Caco-2 (cell line): ENCODE measurements at regions of chr3 and their contacts with region 1.

Region 1: GRCh38 chr3:136075218-136075808 is 109.8 kb downstream of the PPP2R3A start:
- DNase-seq: peak; percentile 61 to 69
- H3K4me3 ChIP-seq: no peak overlapping the region
- H3K4me3 Mint-ChIP-seq: no peak overlapping the region
- H3K27ac Mint-ChIP-seq: peak overlapping the region; percentile 15
- H3K4me1 ChIP-seq: peaks cover 13% of the 10 kb centered on the region
- H3K4me1 Mint-ChIP-seq: peaks cover 9% of the 10 kb centered on the region
- H3K27me3 ChIP-seq: no peaks in the 10 kb centered on the region
- H3K27me3 Mint-ChIP-seq: no peaks in the 10 kb centered on the region
- CTCF ChIP-seq: peak; percentile 78 to 86

Region 2: DNA sequence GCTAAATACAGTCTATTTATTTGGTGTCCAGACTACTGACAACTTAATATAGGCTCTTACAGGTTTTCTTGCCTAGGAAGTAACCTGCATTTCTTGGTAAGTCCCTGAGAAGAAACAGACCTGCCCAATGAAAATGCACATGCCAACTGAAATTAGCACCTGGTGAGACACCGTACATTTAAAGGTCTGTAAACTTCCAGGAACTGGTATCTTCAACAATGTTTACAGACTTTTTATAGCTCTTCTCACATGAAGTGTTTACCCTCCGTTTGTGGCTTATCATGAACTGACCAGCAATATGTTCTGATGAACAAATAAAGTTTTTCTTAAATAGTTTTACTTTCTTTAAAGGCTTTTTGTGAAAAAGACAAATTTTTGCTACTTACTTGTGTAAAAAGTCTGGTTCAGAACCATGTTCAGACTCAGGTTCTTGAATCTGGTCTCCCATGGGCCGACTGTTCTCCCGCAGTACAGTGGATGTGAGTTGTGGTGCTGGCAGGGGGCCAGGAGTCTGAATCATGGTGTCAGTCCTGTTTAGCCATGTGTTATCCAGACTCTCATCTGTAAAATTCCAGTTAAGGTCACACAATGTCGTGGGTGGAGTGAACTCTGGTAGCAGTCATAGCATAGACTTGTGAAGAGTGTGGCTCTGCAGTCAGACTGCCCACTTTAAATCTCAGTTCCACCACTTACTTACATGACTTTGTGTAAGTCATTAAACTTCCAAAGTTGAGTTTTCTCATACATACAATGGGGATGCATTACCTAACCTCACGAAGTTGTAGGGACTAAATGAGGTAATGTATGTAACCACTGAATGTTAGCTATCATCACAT is 268.4 kb after region 1 on chr3:
- CTCF ChIA-PET with region 1: no interaction called
- POLR2A ChIA-PET with region 1: no interaction called
- intact Hi-C with region 1: loop called (anchors 5 kb)
- DNase-seq: peak; percentile 20 to 41
- H3K4me3 ChIP-seq: no peak overlapping the region
- H3K4me3 Mint-ChIP-seq: no peak overlapping the region
- H3K27ac Mint-ChIP-seq: no peak overlapping the region
- H3K4me1 ChIP-seq: peaks cover 9% of the 10 kb centered on the region
- H3K4me1 Mint-ChIP-seq: no peaks in the 10 kb centered on the region
- H3K27me3 ChIP-seq: no peaks in the 10 kb centered on the region
- H3K27me3 Mint-ChIP-seq: no peaks in the 10 kb centered on the region
- CTCF ChIP-seq: no peak

Region 3: GRCh38 chr3:136505676-136506075 is 430.4 kb after region 1 on chr3:
- CTCF ChIA-PET with region 1: no interaction called
- POLR2A ChIA-PET with region 1: no interaction called
- intact Hi-C with region 1: loop called (anchors 10 kb)
- DNase-seq: no peak
- H3K4me3 ChIP-seq: no peak overlapping the region
- H3K4me3 Mint-ChIP-seq: no peak overlapping the region
- H3K27ac Mint-ChIP-seq: no peak overlapping the region
- H3K4me1 ChIP-seq: peaks cover 5% of the 10 kb centered on the region
- H3K4me1 Mint-ChIP-seq: peaks cover 16% of the 10 kb centered on the region
- H3K27me3 ChIP-seq: no peaks in the 10 kb centered on the region
- H3K27me3 Mint-ChIP-seq: no peaks in the 10 kb centered on the region
- CTCF ChIP-seq: no peak

Region 4: DNA sequence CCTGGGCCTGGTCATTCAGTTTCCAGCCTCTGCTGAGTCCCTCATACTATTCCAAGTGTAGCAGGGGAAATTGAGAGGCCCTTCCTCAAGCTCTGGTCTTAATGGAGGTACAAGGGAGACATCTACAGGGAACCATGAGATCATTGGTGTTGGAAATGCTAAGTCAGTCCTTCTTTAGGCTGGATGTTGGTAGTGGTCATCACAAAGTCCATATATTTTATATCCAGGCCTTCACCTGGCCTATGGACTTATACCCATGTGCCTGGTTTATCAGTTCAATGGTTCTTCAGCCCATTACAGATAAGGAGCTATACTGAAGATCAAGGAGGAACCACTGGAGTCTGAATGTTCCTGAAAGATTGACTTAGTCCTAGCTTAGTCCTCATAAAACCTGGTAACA is 541.9 kb after region 1 on chr3:
- CTCF ChIA-PET with region 1: no interaction called
- POLR2A ChIA-PET with region 1: no interaction called
- intact Hi-C with region 1: loop called (anchors 10 kb)
- DNase-seq: peak; percentile 41 to 45
- H3K4me3 ChIP-seq: no peak overlapping the region
- H3K4me3 Mint-ChIP-seq: no peak overlapping the region
- H3K27ac Mint-ChIP-seq: no peak overlapping the region
- H3K4me1 ChIP-seq: peaks cover 12% of the 10 kb centered on the region; the same call in 1 of the 2 replicates
- H3K4me1 Mint-ChIP-seq: peaks cover 16% of the 10 kb centered on the region
- H3K27me3 ChIP-seq: no peaks in the 10 kb centered on the region
- H3K27me3 Mint-ChIP-seq: no peaks in the 10 kb centered on the region
- CTCF ChIP-seq: peak in 1 of 2 experiments; percentile 18